ENCODE measurements at regions of chr19 and their contacts with region 1.

Region 1: DNA sequence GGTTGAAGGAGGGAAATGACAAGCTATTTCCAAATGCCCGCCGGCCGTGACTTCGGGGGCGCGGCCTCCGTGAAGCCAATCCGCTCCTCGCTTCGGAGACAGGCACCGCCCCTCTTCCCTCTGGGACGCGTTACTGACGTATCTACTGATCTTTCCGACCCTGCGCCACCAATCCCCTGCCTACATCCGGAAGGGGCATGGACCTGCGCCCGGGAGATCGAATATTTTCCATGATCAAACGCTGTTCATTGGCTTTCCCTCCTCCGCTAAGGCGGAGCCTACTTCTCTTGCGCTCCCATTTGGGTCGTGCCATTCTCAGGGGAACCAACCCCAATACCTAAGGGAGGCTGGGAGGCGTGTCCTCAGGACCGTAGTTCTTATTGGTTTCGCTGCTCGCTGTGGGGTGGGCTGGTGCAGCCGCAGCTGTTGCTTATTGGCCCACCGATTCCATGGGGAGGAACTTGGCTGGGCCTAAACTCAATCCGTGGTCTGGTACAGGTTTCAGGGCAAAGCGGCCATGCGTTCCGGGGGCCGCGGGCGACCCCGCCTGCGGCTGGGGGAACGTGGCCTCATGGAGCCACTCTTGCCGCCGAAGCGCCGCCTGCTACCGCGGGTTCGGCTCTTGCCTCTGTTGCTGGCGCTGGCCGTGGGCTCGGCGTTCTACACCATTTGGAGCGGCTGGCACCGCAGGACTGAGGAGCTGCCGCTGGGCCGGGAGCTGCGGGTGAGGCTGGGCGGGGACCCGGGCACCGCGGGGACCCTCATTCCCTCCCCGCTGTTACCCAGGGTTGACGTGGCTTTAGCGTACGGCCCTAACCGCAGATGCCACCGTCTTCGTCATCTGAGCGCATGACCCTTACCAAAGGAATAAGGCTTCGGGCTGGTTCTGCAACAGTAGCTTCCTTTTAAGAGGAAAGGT is at the start of gene QPCTL:
- DNase-seq: peak; percentile 91

Region 2: DNA sequence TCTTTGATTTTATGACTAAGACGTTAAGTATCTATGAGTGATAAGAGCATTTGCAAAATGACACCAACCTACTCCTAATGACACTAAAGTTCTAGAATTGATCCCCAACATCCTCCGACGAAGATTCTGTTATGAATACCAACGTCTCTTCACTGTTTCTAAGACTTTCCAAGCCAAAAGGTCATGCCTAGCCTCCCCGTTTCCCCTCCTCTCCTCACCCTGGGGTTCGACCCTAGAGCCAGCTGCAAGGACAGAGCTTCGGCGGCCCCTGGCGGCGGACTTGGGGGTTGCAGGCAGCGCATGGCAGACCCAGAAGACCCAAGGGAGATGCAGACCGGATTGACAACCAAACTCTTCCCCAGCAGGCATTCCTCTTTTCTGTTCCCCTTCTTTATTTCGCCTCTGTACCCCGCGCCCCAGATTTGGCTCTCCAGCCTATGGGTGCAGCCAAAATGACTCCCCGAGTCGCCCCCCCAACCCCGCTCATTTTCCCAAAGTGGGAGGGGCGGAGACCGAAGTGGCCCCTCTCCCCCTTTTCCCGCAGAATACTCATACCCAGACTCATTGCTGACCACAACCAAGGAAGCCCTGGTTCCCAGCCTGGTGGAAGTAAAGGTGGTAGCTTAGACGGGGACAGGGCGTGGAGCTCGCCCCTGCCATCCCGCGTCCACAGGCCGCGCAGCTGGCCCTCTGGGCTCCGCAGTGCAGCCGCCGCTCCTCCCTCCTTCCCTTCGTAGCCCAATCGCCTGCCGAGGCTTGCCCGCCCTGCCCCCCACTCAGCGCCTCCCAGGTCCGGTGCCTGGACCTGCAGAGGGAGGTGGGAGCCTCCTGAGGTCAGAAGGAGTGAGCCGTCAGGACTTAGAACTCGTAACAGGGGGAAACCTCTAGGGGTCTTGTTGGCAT is 49.2 kb before region 1 on chr19:
- CTCF ChIA-PET with region 1: no interaction called
- POLR2A ChIA-PET with region 1: interaction called, 18 read pairs
- DNase-seq: peak; percentile 76

Region 3: GRCh38 chr19:45681391-45682015 is 10.9 kb before region 1 on chr19:
- CTCF ChIA-PET with region 1: interaction called, 17 read pairs
- POLR2A ChIA-PET with region 1: interaction called, 64 read pairs
- DNase-seq: peak; percentile 78

Region 4: DNA sequence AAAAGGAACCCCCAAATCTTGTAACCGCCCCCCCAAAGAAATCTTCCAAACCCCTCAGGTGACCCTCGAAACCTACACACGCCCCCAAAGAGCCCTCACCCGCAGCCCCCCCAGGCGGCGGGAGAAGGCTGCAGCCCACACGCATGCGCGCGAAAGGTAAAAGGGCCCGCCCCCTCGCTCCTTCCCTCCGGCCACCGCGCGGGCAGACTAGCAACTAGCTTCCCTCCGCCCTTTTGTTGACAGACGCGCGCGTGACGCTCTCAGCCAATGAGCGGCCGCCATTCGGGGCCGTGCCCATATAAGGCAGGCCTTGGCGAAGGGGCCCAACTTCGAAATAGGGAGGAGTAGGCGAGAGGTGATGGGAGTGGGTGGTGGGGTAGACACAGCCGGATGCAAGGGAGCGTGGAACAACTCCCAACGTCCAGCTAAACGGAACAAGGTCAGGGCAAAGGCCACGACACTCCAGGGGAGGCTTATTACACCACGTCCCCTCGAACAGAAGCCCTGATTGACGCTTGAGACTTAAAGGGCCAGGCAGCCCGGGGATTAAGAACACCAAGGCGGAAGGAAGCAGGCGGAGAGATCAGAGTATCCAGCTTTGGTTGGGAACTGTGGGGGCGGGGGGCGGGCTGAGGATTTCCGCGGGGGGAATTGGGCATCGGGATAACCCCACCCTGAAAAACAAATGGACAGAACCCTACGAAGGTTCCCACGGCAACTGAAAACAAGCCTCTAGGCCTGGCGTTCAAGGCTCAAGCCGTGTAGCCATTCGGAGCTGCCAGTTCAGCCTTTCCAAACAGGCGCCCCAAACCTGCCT is 24.9 kb after region 1 on chr19:
- CTCF ChIA-PET with region 1: interaction called, 7 read pairs
- POLR2A ChIA-PET with region 1: interaction called, 41 read pairs
- DNase-seq: peak; percentile 97

Region 5: GRCh38 chr19:45746866-45747265 is 54.4 kb after region 1 on chr19:
- CTCF ChIA-PET with region 1: no interaction called
- POLR2A ChIA-PET with region 1: no interaction called
- DNase-seq: no peak

Region 6: GRCh38 chr19:45764945-45765701 is 72.7 kb after region 1 on chr19:
- CTCF ChIA-PET with region 1: interaction called, 5 read pairs
- POLR2A ChIA-PET with region 1: interaction called, 52 read pairs
- DNase-seq: no peak

Region 7: GRCh38 chr19:45798995-45799517 is 106.6 kb after region 1 on chr19:
- CTCF ChIA-PET with region 1: no interaction called
- POLR2A ChIA-PET with region 1: no interaction called
- DNase-seq: peak; percentile 70